Heart left ventricle (tissue), 16 donors: ENCODE measurements at regions of chr5 and their contacts with region 1.

Region 1: GRCh38 chr5:36270220-36270574 is 28.5 kb upstream of the NADK2 start:
- DNase-seq: no peak
- ATAC-seq: no peak
- H3K4me3 ChIP-seq: no peak overlapping the region
- H3K27ac ChIP-seq: no peak overlapping the region
- H3K4me1 ChIP-seq: peaks cover 0 to 12% (median 0%) of the 10 kb centered on the region in 12 donors
- H3K27me3 ChIP-seq: no peaks in the 10 kb centered on the region
- CTCF ChIP-seq: no peak
- POLR2A ChIP-seq: no peak

Region 2: DNA sequence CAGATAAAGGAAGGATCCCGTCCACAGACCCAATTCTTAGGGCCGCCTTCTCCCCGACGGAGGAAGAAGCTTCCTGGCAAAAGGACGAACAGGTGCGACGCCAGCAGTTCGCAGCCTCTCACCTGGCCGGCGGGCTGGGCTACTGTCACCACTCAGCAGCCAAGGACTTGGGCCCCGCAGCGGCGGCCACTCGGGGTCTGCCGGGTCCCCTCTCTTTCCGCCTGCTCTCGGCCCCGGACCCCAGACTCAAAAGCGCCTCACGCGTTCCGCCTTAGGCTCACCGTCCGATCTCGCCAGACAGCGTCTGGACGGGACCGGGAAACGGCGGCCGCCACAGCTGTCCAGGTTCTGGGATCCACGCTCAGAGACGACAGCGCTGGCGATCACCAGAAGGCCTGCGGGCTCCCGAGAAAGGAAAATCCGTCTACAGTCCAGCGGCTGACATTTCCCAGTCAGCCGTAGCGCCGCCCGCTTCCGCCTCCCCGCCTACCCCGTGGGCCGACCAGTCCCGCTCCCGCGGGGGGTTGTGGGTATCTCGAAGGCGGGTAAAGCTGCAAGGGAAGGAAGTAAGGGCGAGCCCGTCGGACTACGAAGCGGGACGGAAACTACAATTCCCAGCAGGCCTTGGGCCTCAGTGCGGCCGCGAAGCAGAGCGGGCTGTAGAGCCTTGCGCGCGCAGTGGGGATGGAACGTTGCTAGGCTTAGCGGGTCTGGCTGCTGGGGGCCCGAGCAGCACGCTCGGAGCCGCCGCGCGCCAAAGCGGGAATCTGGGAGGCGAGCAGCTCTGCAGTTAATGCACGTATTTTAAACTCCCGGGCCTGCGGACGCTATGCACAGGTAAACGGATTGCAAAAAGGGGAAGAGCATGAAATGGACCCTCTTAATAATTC is 118.5 kb before region 1 on chr5 and contains the starts of genes LMBRD2 and SKP2:
- intact Hi-C with region 1: no loop called
- DNase-seq: peak; percentile 98 to 99 (median 98)
- ATAC-seq: peak; percentile 99 to 100 (median 99)
- H3K4me3 ChIP-seq: peak within 1 kb of the TSS; percentile 64 to 98 (median 90)
- H3K27ac ChIP-seq: peak within 1 kb of the TSS; percentile 33 to 93 (median 85)
- H3K4me1 ChIP-seq: peaks cover 0 to 52% (median 29%) of the 10 kb centered on the region in 12 donors
- H3K27me3 ChIP-seq: no peaks in the 10 kb centered on the region
- CTCF ChIP-seq: no peak
- POLR2A ChIP-seq: peak in 1 of 2 donors; percentile 73
- total RNA-seq, gene LMBRD2: 10.0 to 18.2 (median 13.9) TPM
- total RNA-seq, gene SKP2: 3.4 to 12.0 (median 6.0) TPM

Region 3: GRCh38 chr5:36403632-36404311 is 133.6 kb after region 1 on chr5:
- intact Hi-C with region 1: loop called in 9 of 10 experiments (anchors 2 to 10 kb)
- DNase-seq: peak in 4 of 5 donors; percentile 22 to 53 (median 36)
- ATAC-seq: peak; percentile 45 to 80 (median 60)
- H3K4me3 ChIP-seq: no peak overlapping the region
- H3K27ac ChIP-seq: peak overlapping the region in 10 of 12 donors; percentile 3 to 65 (median 31)
- H3K4me1 ChIP-seq: peaks cover 0 to 10% (median 0%) of the 10 kb centered on the region in 12 donors
- H3K27me3 ChIP-seq: no peaks in the 10 kb centered on the region
- CTCF ChIP-seq: no peak
- POLR2A ChIP-seq: no peak

Region 4: GRCh38 chr5:36695677-36696673 is 425.8 kb after region 1 on chr5:
- intact Hi-C with region 1: loop called in 5 of 10 experiments (anchors 5 to 10 kb)
- DNase-seq: peak in 3 of 5 donors; percentile 34 to 63 (median 61)
- ATAC-seq: peak in 2 of 4 donors; percentile 27 to 35
- H3K4me3 ChIP-seq: no peak overlapping the region
- H3K27ac ChIP-seq: no peak overlapping the region
- H3K4me1 ChIP-seq: peaks cover 0 to 32% (median 18%) of the 10 kb centered on the region in 12 donors
- H3K27me3 ChIP-seq: no peaks in the 10 kb centered on the region
- CTCF ChIP-seq: peak; percentile 33 to 71 (median 52)
- POLR2A ChIP-seq: no peak